ENCODE measurements at regions of chr11 and their contacts with region 1.

Region 1: GRCh38 chr11:45110562-45110961 is 35.9 kb upstream of the PRDM11 start:
- DNase-seq: peak in 4 of 5 donors; percentile 59 to 90 (median 75)
- H3K4me3 ChIP-seq: no peak overlapping the region
- H3K27ac ChIP-seq: no peak overlapping the region
- H3K4me1 ChIP-seq: no peaks in the 10 kb centered on the region
- H3K27me3 ChIP-seq: no peaks in the 10 kb centered on the region
- CTCF ChIP-seq: peak; percentile 81

Region 2: DNA sequence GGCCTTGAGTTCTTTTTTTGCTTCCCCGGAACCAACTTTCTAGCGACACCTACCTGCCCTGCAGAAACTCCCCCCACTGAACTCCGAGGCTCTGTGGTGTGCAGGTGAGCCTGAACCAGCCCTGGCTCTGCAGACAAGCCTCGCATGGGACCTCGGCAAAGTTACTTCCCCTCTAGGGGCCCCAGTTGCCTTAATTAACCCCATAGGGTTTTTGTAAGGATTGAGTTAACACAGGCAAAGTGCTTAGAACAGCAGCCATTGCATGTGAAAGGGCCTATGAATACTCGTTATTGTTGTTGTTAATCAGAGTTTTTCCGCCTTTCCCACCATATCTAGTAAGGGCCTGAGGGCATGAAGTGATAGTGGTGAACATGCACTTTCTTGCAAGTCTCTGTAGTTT is 188.2 kb after region 1 on chr11:
- intact Hi-C with region 1: loop called (anchors 10 kb)
- DNase-seq: no peak
- H3K4me3 ChIP-seq: no peak overlapping the region
- H3K27ac ChIP-seq: no peak overlapping the region
- H3K4me1 ChIP-seq: peaks cover 0 to 4% (median 0%) of the 10 kb centered on the region in 3 donors
- H3K27me3 ChIP-seq: no peaks in the 10 kb centered on the region
- CTCF ChIP-seq: no peak

Region 3: GRCh38 chr11:45332276-45332934 is 221.8 kb after region 1 on chr11:
- intact Hi-C with region 1: loop called (anchors 5 kb)
- DNase-seq: peak in 4 of 5 donors; percentile 56 to 74 (median 66)
- H3K4me3 ChIP-seq: peak overlapping the region in 2 of 3 donors; percentile 13 to 44
- H3K27ac ChIP-seq: no peak overlapping the region
- H3K4me1 ChIP-seq: no peaks in the 10 kb centered on the region
- H3K27me3 ChIP-seq: no peaks in the 10 kb centered on the region
- CTCF ChIP-seq: peak; percentile 60

Measured in kidney (tissue), 22 donors.